Tibial artery (tissue), 4 donors: ENCODE measurements at regions of chr1 and their contacts with region 1.

Region 1: DNA sequence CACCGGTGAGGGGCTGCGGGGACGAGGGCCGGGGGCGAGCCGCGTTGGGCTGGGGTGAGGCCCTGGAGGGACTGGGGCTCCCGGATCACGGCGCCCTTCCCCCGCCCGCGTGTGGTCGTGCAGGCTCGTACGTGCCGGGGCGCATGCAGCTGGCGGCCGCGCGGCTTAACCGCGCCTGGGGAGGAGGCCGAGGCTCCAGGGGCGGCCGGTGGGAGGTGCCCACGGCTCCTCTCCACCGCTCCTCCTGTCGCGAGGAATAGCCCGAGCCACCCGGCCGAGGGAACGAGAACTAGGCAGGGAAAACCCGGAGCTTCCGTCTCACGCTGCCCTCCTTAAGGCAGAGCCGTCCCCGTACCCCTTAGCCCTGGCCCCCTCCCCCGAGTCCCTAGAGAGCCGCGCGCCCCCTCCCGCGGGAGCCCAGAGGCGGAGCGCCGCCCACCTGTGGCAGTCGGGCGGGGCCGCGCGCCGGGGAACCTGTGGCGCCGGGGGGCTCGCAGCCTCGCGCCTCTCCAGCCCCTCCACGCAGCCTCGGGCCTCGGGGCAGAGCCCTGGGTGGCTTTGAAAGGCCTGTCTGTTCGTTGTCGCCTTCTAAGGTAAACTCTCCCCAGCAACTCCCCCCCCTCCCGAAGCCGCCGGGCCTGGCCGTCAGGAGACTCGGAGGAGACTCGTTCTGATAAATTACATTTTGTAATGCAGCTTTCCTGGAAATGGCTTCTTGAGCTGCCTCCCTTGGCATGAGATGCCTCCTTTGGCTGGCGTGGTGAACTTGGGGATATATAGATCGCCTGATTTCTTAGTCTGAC is 746 bp downstream of the AK4 start:
- DNase-seq: peak; percentile 54 to 83
- H3K4me3 ChIP-seq: peak overlapping the region; percentile 69 to 94
- H3K27ac ChIP-seq: peak overlapping the region; percentile 98 to 99
- H3K4me1 ChIP-seq: peaks cover 0 to 27% (median 18%) of the 10 kb centered on the region in 4 donors
- H3K27me3 ChIP-seq: no peaks in the 10 kb centered on the region
- CTCF ChIP-seq: no peak

Region 2: DNA sequence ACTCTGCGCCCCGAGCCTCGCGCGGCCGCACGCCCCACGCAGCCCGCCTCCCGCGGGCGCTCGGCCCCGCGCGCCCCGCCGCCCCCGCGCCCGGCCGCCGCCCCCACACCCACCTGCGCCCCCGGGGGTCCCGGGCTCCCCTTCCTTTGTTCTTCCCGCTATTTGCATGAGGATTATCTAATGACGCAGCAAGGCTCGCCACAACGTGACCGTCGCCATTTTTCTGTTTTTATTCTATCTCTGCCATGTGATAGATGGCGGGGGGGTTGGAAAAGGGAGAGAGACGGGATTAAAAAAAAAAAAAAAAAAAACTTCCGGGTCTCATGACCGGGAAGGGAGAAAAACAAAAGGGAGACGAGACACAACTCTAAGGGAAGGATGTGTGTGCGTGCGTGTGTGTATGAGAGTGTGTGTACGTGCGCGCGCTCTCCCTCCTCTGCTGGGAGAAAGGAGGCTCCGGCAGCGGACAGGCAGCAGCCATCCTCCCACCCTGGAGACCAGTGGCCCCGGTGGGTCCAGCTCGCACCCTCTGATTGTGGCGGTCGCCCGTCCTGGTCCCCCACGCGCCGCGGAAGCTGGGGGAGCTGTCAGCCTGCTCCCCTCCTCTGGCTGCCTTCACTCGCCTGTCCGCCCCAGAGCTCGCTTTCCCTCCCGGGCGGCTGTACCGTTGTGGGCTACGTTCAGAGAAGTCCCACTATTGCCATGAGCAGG is 81.1 kb before region 1 on chr1:
- intact Hi-C with region 1: loop called (anchors 5 kb)
- DNase-seq: peak; percentile 85 to 88
- H3K4me3 ChIP-seq: peak overlapping the region; percentile 73 to 88
- H3K27ac ChIP-seq: peak overlapping the region; percentile 98 to 100
- H3K4me1 ChIP-seq: peaks cover 0 to 36% (median 25%) of the 10 kb centered on the region in 4 donors
- H3K27me3 ChIP-seq: no peaks in the 10 kb centered on the region
- CTCF ChIP-seq: no peak

Region 3: GRCh38 chr1:65170511-65171142 is 21.9 kb after region 1 on chr1:
- intact Hi-C with region 1: loop called (anchors 2 kb)
- DNase-seq: peak; percentile 75 to 82
- H3K4me3 ChIP-seq: peak overlapping the region; percentile 3 to 15
- H3K27ac ChIP-seq: peak overlapping the region; percentile 71 to 75
- H3K4me1 ChIP-seq: peaks cover 0 to 60% (median 28%) of the 10 kb centered on the region in 4 donors
- H3K27me3 ChIP-seq: no peaks in the 10 kb centered on the region
- CTCF ChIP-seq: no peak

Region 4: DNA sequence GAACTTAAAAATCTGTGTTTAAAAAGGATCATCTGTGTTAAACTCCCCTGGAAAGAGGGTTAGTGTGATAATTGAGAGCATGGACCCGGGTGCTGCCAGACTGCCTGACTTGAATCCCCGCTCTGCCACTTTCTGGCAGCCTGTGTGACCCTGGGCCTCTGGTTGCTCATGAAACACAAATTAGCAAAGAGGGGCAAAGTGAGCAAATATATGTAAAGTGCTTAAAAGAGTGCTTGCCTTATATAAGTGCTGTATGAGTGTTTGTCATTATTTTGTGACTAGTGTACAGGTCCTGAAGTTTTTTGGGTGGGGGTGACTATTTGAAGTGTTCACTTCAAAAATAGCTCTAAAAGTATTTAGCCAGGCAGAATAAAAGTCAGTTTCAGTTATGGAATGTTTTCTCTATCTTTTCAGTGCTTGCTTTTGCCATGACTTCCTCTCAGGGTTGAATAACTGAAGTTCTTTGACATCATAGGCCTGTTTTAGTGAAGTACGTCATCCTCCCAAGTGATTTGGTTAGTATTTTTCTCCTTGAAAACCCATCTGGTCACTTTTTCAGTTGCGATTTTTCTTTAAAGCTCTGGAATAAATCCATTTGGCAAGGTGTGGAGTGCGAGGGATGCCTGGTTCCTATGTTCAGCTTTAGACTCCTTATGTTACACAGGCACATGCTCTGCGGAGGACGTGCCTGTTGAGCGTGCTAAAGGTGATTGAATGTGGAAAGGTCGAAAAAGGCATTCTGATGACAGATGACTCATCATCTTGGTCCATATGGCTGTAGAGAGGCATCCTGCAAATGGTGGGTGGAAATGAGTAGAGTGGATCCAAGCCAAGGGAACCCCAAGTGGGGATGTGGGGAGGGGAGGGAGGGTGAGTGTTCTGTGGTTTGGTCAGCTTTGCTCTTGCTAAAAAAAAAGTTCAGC is 47.0 kb after region 1 on chr1:
- intact Hi-C with region 1: loop called (anchors 10 kb)
- DNase-seq: no peak
- H3K4me3 ChIP-seq: no peak overlapping the region
- H3K27ac ChIP-seq: peak overlapping the region; percentile 75 to 78
- H3K4me1 ChIP-seq: peaks cover 0 to 35% (median 10%) of the 10 kb centered on the region in 4 donors
- H3K27me3 ChIP-seq: no peaks in the 10 kb centered on the region
- CTCF ChIP-seq: no peak